GM13976 (cell line): ENCODE measurements at regions of chr5 and their contacts with region 1.

Region 1: GRCh38 chr5:58849921-58850667 is 267.2 kb downstream of the RAB3C start:
- DNase-seq: peak; percentile 25
- CTCF ChIP-seq: peak; percentile 32

Region 2: GRCh38 chr5:58477760-58478376 is 372.2 kb before region 1 on chr5:
- in situ Hi-C with region 1: loop called (anchors 10 kb)
- DNase-seq: no peak
- CTCF ChIP-seq: no peak